ENCODE measurements at regions of chr5 and their contacts with region 1.

Region 1: GRCh38 chr5:164504141-164504772 is 998.8 kb downstream of the MAT2B start:
- DNase-seq: peak; percentile 7
- H3K4me3 ChIP-seq: peak overlapping the region; percentile 21
- CTCF ChIP-seq: peak; percentile 64

Region 2: DNA sequence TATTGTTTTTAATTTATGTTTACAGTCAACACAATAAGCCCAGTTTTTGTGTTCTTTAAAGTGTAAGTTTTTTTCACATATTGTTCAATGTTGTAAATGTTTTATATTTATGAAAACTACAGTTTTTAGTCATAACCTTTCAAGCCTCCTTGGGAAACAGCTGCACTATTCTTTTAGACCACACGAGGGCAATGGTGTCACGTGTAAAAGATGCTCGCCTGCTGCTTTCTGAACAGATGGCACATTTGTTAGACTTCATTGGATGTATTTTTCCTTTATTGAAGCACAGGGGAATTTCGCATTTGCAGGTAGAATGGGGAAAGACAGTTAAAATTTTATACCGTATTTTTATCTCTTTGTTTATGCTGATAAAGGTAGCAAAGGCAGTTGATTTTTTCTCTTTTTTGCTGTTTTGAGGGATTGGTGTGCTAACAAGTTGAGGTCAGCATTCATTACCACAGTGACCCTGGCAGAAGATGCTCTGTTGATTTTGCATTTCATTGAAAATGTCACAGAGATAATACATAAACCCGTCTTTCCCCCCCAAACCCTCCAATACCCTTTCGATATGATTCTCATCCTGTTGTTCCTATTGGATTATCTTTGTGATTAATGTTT is 939.8 kb before region 1 on chr5:
- CTCF ChIA-PET with region 1: interaction called, 152 read pairs
- POLR2A ChIA-PET with region 1: no interaction called
- DNase-seq: no peak
- H3K4me3 ChIP-seq: no peak overlapping the region
- CTCF ChIP-seq: peak; percentile 70

Region 3: GRCh38 chr5:163695830-163696578 is 808.3 kb before region 1 on chr5:
- CTCF ChIA-PET with region 1: interaction called, 76 read pairs
- POLR2A ChIA-PET with region 1: no interaction called
- DNase-seq: peak; percentile 21
- H3K4me3 ChIP-seq: no peak overlapping the region
- CTCF ChIP-seq: peak; percentile 72

Region 4: GRCh38 chr5:164013077-164013670 is 491.1 kb before region 1 on chr5:
- CTCF ChIA-PET with region 1: interaction called, 73 read pairs
- POLR2A ChIA-PET with region 1: no interaction called
- DNase-seq: no peak
- H3K4me3 ChIP-seq: no peak overlapping the region
- CTCF ChIP-seq: peak; percentile 54

Region 5: DNA sequence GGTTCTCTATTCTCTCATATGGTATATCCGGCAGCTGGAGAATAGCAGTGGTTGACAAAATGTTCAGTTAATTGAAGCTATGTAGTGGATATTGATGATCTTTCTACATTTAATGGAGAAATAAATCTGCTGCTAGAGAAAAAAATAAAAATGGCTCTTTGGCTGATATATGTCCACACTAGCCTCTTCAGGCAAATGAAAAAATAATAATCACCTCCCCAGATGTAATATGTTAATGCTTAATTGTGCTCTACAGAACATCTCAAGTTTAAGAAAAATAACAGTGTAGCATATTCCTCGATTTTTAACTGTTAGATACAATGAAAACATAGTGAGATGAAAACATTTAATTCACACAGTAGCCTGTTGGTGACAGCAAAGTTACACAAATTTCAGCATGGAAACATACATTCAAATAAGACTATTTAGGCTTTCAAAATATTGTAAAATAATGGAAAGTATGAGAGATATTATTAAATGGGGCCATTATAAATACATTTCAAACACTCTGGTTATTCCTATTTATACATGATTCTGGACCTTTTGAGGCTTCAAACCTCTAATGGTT is 455.8 kb before region 1 on chr5:
- CTCF ChIA-PET with region 1: interaction called, 10 read pairs
- POLR2A ChIA-PET with region 1: no interaction called
- DNase-seq: no peak
- H3K4me3 ChIP-seq: no peak overlapping the region
- CTCF ChIP-seq: no peak

Region 6: DNA sequence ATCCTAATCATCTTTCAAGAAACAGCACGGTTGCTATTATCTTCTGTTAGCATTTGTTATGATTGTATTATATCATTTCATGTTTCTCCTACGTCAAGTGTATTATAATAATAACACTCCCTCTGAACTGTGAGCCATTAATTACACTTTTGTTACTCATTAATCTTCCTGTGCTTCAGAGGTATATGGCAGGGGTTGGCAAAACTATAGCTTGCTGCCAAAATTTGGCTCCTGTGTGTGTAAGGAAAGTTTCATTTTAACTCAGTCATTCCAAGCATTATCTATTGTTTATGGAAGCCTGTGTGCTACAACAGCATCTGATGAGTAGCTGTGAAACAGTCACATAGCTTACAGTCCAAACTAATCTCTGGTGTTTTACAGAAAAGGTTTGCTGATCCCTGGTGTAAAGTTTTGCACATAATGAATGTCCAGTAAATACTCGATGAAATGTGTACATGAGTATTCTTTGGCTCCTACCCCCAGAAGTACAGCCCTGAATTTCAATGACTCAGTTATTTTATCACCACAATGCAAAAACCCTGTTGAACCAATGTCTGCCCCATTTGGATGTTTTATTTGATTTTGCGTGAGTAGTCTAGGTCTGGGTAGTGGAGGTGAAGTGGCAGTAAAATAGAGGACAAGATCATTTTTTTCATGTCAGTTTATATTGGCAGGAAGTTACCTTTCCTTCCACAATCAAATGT is 350.6 kb before region 1 on chr5:
- CTCF ChIA-PET with region 1: no interaction called
- POLR2A ChIA-PET with region 1: no interaction called
- DNase-seq: no peak
- H3K4me3 ChIP-seq: no peak overlapping the region
- CTCF ChIP-seq: no peak

Region 7: DNA sequence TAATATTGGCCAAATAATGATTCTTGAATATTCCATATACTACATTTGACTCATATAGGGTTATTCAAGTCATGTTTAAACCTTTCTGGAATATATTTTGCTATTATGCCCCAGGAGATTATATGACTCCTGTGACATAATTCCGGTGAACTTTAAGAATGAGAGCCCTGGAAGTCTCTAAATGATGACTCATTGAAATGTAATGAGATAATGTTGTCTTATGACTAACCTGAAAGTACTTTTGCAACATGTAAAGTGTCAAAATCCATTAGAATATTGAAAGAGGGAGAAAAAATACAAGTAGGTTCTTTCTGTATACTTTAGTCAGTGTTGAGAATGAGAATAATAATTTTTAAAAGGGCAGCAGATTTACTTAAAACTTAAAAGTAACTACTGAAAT is 168.4 kb before region 1 on chr5:
- CTCF ChIA-PET with region 1: no interaction called
- POLR2A ChIA-PET with region 1: no interaction called
- DNase-seq: no peak
- H3K4me3 ChIP-seq: no peak overlapping the region
- CTCF ChIP-seq: no peak

Region 8: DNA sequence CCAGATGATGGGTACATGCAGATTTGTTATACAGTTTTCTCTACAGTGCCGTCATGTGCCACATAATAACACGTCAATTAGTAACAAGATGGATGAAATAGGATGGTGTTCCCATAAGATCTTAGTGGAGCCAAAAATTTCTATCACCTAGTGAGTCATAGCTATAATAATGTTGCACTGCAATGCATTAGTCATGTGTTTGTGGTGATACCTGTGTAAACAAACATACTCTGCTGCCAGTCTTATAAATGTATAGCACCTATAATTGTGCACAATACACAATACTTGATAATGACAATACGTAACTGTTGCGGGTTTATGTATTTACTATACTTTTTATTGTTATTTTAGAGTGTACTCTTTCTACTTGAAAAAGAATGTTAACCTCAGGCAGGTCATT is 133.4 kb before region 1 on chr5:
- CTCF ChIA-PET with region 1: no interaction called
- POLR2A ChIA-PET with region 1: no interaction called
- DNase-seq: no peak
- H3K4me3 ChIP-seq: no peak overlapping the region
- CTCF ChIP-seq: no peak

Region 9: DNA sequence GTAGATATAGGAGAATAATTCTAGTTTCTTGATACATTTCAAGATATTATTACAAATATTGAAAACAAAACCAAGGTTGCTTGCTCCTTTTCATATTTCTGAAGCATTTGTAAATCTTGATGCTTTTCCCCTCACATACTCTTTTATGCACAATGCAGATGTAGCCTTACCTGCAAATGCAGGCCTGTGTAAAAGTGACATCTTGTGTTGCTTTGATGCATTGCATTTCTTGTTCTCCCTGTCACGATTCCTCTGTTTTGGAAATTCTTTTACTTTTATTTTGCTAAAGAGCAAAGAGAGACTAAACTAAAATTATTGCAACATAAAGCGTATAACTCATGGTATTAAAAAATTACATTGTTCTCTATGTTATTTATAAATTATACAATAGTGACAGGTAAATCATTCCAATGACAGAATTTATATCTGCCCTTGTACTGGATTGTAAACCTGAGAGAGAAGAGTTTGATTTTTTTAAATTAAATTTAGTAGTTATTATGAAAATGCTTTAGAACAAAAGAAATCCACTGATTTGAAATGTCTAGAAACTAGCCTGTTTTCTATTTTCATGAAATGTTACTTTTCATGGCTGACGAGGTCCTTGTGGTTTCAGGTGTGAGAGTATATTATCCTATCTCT is 28.8 kb before region 1 on chr5:
- CTCF ChIA-PET with region 1: interaction called, 13 read pairs
- POLR2A ChIA-PET with region 1: no interaction called
- DNase-seq: no peak
- H3K4me3 ChIP-seq: no peak overlapping the region
- CTCF ChIP-seq: peak; percentile 52